BJ (cell line): ENCODE measurements at regions of chr9 and their contacts with region 1.

Region 1: DNA sequence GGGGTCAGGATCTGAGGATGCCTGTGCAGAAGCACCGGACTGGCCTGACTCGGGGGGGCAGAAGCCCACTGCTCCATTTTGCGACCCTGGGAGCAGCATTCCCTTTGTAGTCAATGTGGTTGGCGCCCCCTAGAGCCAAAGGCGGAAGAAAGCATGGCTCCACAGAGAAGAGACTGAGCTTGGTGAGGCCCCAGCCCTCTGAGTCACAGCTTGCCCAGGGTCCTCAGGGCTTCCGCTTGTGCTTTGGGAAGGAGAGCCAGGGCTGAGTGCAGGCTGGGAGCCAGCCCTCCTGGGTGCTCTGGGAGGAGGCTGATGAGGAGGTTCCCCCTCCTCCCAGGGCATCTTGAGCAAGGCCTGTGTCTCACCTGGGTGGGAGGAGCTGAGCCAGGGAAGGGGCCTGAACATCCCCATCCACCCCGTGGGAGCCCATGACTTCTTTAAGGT is 5.5 kb upstream of the AQP3 start:
- DNase-seq: no peak
- H3K4me3 ChIP-seq: no peak overlapping the region
- H3K27me3 ChIP-seq: peaks cover 2% of the 10 kb centered on the region; the same call in 1 of the 2 replicates
- CTCF ChIP-seq: peak; percentile 86

Region 2: DNA sequence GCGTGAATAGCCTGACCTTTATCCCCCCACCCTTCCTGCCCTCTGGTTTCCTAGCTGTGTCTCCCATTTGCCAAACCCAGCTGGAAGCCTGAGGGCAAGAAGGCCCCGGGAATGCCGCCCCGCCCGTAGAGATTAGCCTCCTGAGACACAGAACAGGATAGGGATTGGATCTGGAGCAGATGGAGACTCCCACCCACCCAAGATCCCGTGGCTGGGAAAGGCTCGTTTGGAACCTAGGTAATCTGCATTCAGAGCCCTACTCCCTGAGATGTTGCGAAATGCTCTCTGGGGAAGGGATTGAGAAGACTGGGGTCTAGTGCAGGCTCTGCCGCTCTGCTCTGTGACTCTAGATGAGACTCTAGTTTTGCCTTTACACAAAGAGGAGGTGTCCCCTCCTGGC is 16.4 kb before region 1 on chr9:
- CTCF ChIA-PET with region 1: interaction called, 57 read pairs
- POLR2A ChIA-PET with region 1: no interaction called
- DNase-seq: no peak
- H3K4me3 ChIP-seq: no peak overlapping the region
- H3K27me3 ChIP-seq: peaks cover 14% of the 10 kb centered on the region
- CTCF ChIP-seq: no peak

Region 3: DNA sequence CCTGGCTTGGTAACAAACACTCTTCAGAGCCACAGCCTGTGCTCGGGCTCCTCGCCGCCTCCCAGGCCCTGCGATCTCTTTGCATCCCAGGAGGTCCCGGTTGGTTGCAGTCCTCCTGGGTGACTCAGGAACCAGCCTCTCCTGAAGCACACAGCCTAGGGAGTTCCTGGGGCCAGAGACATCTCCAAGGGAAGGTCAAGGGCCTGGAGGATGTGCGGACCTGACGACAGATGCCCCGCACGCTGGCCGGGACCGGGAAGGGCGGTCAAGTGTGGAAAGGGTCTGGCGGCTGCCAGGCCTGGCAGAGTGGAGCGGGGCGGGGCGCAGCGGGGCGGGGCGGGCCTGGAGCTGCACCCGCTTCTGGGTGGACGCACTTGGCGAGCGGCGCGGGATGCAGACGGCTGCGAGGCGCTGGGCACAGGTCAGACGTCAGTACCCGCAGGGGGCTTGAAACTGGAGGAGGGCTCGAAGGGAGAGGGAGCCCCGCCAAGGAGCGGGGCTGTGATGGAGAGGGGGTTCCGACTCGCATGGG is 297.5 kb after region 1 on chr9:
- CTCF ChIA-PET with region 1: no interaction called
- POLR2A ChIA-PET with region 1: no interaction called
- DNase-seq: no peak
- H3K4me3 ChIP-seq: peak overlapping the region; percentile 43
- H3K27me3 ChIP-seq: no peaks in the 10 kb centered on the region; the same call in 1 of the 2 replicates
- CTCF ChIP-seq: no peak